Mammary epithelial cell (primary cell): ENCODE measurements at regions of chr3 and their contacts with region 1.

Region 1: DNA sequence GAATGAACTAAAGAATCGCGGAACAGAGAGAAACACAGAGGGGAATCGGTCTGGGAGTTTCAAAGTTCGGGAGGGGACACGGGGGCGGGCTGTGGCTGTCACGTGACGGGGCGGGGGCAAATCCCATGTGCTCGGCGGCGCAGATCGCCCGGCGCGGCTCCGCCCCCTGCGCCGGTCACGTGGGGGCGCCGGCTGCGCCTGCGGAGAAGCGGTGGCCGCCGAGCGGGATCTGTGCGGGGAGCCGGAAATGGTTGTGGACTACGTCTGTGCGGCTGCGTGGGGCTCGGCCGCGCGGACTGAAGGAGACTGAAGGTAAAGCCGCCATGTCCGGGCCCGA is at the start of gene EIF4G1:
- DNase-seq: peak; percentile 92
- H3K4me3 ChIP-seq: peak within 1 kb of the TSS; percentile 45 to 81 (median 73)
- H3K27ac ChIP-seq: peak within 1 kb of the TSS; percentile 69
- H3K4me1 ChIP-seq: peaks cover 22% of the 10 kb centered on the region
- H3K27me3 ChIP-seq: no peaks in the 10 kb centered on the region
- CTCF ChIP-seq: no peak
- total RNA-seq, gene EIF4G1: 278 to 534 TPM

Region 2: GRCh38 chr3:184335661-184336546 is 21.6 kb after region 1 on chr3:
- CTCF ChIA-PET with region 1: no interaction called
- dilution Hi-C with region 1: no loop called
- in situ Hi-C with region 1: no loop called
- intact Hi-C with region 1: loop called (anchors 2 kb)
- DNase-seq: peak; percentile 70
- H3K4me3 ChIP-seq: peak overlapping the region; percentile 51 to 77 (median 55)
- H3K27ac ChIP-seq: peak overlapping the region; percentile 81
- H3K4me1 ChIP-seq: peaks cover 75% of the 10 kb centered on the region
- H3K27me3 ChIP-seq: no peaks in the 10 kb centered on the region
- CTCF ChIP-seq: no peak

Region 3: GRCh38 chr3:184354121-184354728 is 39.9 kb after region 1 on chr3:
- CTCF ChIA-PET with region 1: no interaction called
- dilution Hi-C with region 1: loop called (anchors 5 kb)
- in situ Hi-C with region 1: no loop called
- intact Hi-C with region 1: no loop called
- DNase-seq: no peak
- H3K4me3 ChIP-seq: no peak overlapping the region
- H3K27ac ChIP-seq: no peak overlapping the region
- H3K4me1 ChIP-seq: no peaks in the 10 kb centered on the region
- H3K27me3 ChIP-seq: no peaks in the 10 kb centered on the region
- CTCF ChIP-seq: peak; percentile 68 to 87

Region 4: GRCh38 chr3:184417619-184418327 is 103.4 kb after region 1 on chr3:
- CTCF ChIA-PET with region 1: no interaction called
- dilution Hi-C with region 1: no loop called
- in situ Hi-C with region 1: no loop called
- intact Hi-C with region 1: no loop called
- DNase-seq: peak; percentile 51
- H3K4me3 ChIP-seq: no peak overlapping the region
- H3K27ac ChIP-seq: no peak overlapping the region
- H3K4me1 ChIP-seq: no peaks in the 10 kb centered on the region
- H3K27me3 ChIP-seq: no peaks in the 10 kb centered on the region
- CTCF ChIP-seq: peak; percentile 96 to 98